ENCODE measurements at regions of chr2 and their contacts with region 1.

Region 1: GRCh38 chr2:39476524-39476923 is 39.4 kb upstream of the MAP4K3 start:
- DNase-seq: peak; percentile 77
- ATAC-seq: peak; percentile 96
- H3K4me3 ChIP-seq: peak overlapping the region in 1 of 5 experiments; percentile 22
- H3K4me3 Mint-ChIP-seq: peak overlapping the region; percentile 75
- H3K27ac ChIP-seq: peak overlapping the region; percentile 37 to 72
- H3K27ac Mint-ChIP-seq: peak overlapping the region; percentile 91
- H3K4me1 ChIP-seq: peaks cover 16 to 20% of the 10 kb centered on the region in 2 donors
- H3K4me1 Mint-ChIP-seq: peaks cover 21% of the 10 kb centered on the region
- H3K27me3 ChIP-seq: no peaks in the 10 kb centered on the region
- H3K27me3 Mint-ChIP-seq: no peaks in the 10 kb centered on the region
- CTCF ChIP-seq: no peak

Region 2: GRCh38 chr2:39225567-39225966 is 251.0 kb before region 1 on chr2:
- CTCF ChIA-PET with region 1: no interaction called
- POLR2A ChIA-PET with region 1: no interaction called
- intact Hi-C with region 1: no loop called
- DNase-seq: no peak
- ATAC-seq: no peak
- H3K4me3 ChIP-seq: no peak overlapping the region
- H3K4me3 Mint-ChIP-seq: no peak overlapping the region
- H3K27ac ChIP-seq: no peak overlapping the region
- H3K27ac Mint-ChIP-seq: no peak overlapping the region
- H3K4me1 ChIP-seq: peaks cover 6 to 11% of the 10 kb centered on the region in 2 donors
- H3K4me1 Mint-ChIP-seq: peaks cover 12% of the 10 kb centered on the region
- H3K27me3 ChIP-seq: no peaks in the 10 kb centered on the region
- H3K27me3 Mint-ChIP-seq: no peaks in the 10 kb centered on the region
- CTCF ChIP-seq: no peak

Region 3: DNA sequence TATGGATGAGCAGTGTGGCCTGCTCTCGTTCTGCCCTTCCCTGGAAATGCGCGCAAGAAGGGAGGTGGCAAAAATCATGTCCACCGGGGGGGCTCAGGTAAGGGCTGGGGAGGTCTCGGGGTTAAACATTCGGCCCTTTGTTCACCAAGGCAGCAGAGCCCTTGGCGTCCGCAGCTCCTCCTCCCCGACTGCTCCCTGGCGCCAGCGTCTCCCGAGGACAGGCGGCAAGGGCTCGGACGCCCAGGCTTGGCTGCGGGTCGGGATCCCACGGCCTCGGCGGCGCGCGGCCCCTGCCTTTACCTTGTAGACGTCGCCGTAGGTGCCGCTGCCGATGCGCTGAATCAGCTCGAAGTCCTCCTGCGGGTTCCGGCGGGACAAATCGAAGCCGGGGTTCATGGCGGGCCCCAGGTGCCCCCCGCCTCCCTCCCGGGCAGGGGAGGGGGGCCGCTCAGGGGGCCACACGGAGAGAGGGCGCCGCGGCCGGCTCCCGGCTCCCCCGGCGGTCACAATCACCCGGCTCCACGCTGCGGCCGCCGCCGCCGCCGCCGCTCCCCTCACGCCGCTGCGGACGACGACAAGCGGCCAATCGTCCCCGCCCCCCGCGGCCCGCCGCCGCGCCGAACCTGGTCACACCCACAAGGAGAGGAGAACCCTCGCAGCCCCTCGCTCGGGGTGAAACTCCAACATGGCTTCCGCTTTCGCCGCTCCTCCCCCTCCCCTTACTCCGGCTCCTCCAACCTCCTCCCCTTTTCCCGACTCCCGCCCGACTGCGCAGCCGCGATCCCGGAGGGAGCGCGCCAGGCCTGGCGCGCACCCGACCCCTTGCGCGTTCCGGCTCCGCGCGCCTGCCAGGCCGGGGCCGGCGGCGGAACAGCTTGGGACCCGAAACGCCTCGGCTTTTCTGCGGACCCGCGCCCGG is 39.7 kb before region 1 on chr2 and contains the start of gene MAP4K3:
- CTCF ChIA-PET with region 1: interaction called, 3 read pairs
- POLR2A ChIA-PET with region 1: no interaction called
- intact Hi-C with region 1: loop called (anchors 5 kb)
- DNase-seq: peak; percentile 85
- ATAC-seq: peak; percentile 78
- H3K4me3 ChIP-seq: peak within 1 kb of the TSS; percentile 71 to 85 (median 80)
- H3K4me3 Mint-ChIP-seq: peak within 1 kb of the TSS; percentile 88
- H3K27ac ChIP-seq: peak within 1 kb of the TSS; percentile 3 to 78
- H3K27ac Mint-ChIP-seq: peak within 1 kb of the TSS; percentile 87
- H3K4me1 ChIP-seq: peaks cover 17% of the 10 kb centered on the region in 2 donors
- H3K4me1 Mint-ChIP-seq: peaks cover 29% of the 10 kb centered on the region
- H3K27me3 ChIP-seq: no peaks in the 10 kb centered on the region
- H3K27me3 Mint-ChIP-seq: no peaks in the 10 kb centered on the region
- CTCF ChIP-seq: no peak
- total RNA-seq, gene MAP4K3: 28.3 and 31.3 TPM in 2 replicates

Region 4: GRCh38 chr2:39513641-39514094 is 37.1 kb after region 1 on chr2:
- CTCF ChIA-PET with region 1: interaction called, 3 read pairs
- POLR2A ChIA-PET with region 1: interaction called, 5 read pairs
- intact Hi-C with region 1: loop called (anchors 5 kb)
- DNase-seq: peak; percentile 48
- ATAC-seq: peak; percentile 47
- H3K4me3 ChIP-seq: no peak overlapping the region
- H3K4me3 Mint-ChIP-seq: no peak overlapping the region
- H3K27ac ChIP-seq: no peak overlapping the region
- H3K27ac Mint-ChIP-seq: no peak overlapping the region
- H3K4me1 ChIP-seq: peaks cover 7 to 9% of the 10 kb centered on the region in 2 donors
- H3K4me1 Mint-ChIP-seq: peaks cover 17% of the 10 kb centered on the region
- H3K27me3 ChIP-seq: no peaks in the 10 kb centered on the region
- H3K27me3 Mint-ChIP-seq: no peaks in the 10 kb centered on the region
- CTCF ChIP-seq: peak; percentile 26

Measured in B cell (primary cell).